ENCODE measurements at regions of chr2 and their contacts with region 1.

Region 1: GRCh38 chr2:37877457-37878315 is 47.4 kb upstream of the RMDN2 start:
- DNase-seq: peak in 1 of 5 donors; percentile 39
- ATAC-seq: peak; percentile 43 to 64 (median 46)
- H3K4me3 ChIP-seq: peak overlapping the region in 1 of 12 donors; percentile 12
- H3K27ac ChIP-seq: peak overlapping the region in 2 of 12 donors; percentile 5 to 8
- H3K4me1 ChIP-seq: peaks cover 0 to 47% (median 27%) of the 10 kb centered on the region in 12 donors
- H3K27me3 ChIP-seq: peaks cover 0 to 2% (median 0%) of the 10 kb centered on the region in 9 donors
- CTCF ChIP-seq: peak; percentile 61 to 87 (median 82)
- POLR2A ChIP-seq: no peak

Region 2: GRCh38 chr2:37156857-37157714 is 720.6 kb before region 1 on chr2 and contains the start of gene EIF2AK2:
- intact Hi-C with region 1: loop called in 1 of 10 experiments (anchors 10 kb)
- DNase-seq: peak; percentile 86 to 91 (median 88)
- ATAC-seq: peak; percentile 60 to 94 (median 90)
- H3K4me3 ChIP-seq: peak within 1 kb of the TSS; percentile 72 to 100 (median 89)
- H3K27ac ChIP-seq: peak within 1 kb of the TSS; percentile 75 to 96 (median 92)
- H3K4me1 ChIP-seq: peaks cover 0 to 25% (median 18%) of the 10 kb centered on the region in 12 donors
- H3K27me3 ChIP-seq: no peaks in the 10 kb centered on the region
- CTCF ChIP-seq: peak in 1 of 12 donors; percentile 11
- POLR2A ChIP-seq: no peak
- total RNA-seq, gene EIF2AK2: 12.5 to 38.2 (median 19.6) TPM

Region 3: GRCh38 chr2:37389989-37390765 is 487.5 kb before region 1 on chr2:
- intact Hi-C with region 1: loop called in 5 of 10 experiments (anchors 5 kb)
- DNase-seq: peak in 3 of 5 donors; percentile 30 to 34 (median 31)
- ATAC-seq: peak in 3 of 4 donors; percentile 67 to 93 (median 74)
- H3K4me3 ChIP-seq: no peak overlapping the region
- H3K27ac ChIP-seq: peak overlapping the region in 8 of 12 donors; percentile 26 to 87 (median 54)
- H3K4me1 ChIP-seq: peaks cover 0 to 46% (median 9%) of the 10 kb centered on the region in 12 donors
- H3K27me3 ChIP-seq: no peaks in the 10 kb centered on the region
- CTCF ChIP-seq: no peak
- POLR2A ChIP-seq: no peak

Region 4: DNA sequence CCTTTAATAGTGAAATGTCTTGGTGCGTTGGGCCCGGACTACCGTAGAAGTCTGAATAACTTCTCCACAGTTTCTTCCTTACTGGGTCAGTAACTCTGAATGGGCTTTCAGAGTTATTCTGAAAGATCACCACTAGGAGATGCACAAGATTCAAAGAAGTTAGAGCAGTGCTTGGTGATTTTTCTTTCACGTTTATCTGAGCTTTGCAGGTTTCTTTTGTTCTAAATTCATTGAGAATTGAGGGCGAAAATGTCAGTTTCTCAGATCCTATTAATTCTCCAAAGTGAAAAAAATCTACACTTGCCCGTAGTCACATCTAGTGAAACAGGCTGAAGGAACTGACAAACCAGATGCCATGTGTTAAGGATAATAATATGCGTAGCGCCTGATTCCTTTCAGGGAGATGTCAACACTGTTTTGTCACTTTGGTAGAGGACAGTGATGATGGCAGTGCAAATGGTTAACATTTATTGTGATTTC is 463.2 kb before region 1 on chr2:
- intact Hi-C with region 1: loop called (anchors 1 to 5 kb)
- DNase-seq: no peak
- ATAC-seq: peak; percentile 72 to 88 (median 79)
- H3K4me3 ChIP-seq: peak overlapping the region in 3 of 12 donors; percentile 2 to 25 (median 12)
- H3K27ac ChIP-seq: peak overlapping the region in 11 of 12 donors; percentile 5 to 66 (median 39)
- H3K4me1 ChIP-seq: peaks cover 0 to 21% (median 9%) of the 10 kb centered on the region in 12 donors
- H3K27me3 ChIP-seq: no peaks in the 10 kb centered on the region
- CTCF ChIP-seq: peak; percentile 64 to 93 (median 86)
- POLR2A ChIP-seq: no peak

Region 5: DNA sequence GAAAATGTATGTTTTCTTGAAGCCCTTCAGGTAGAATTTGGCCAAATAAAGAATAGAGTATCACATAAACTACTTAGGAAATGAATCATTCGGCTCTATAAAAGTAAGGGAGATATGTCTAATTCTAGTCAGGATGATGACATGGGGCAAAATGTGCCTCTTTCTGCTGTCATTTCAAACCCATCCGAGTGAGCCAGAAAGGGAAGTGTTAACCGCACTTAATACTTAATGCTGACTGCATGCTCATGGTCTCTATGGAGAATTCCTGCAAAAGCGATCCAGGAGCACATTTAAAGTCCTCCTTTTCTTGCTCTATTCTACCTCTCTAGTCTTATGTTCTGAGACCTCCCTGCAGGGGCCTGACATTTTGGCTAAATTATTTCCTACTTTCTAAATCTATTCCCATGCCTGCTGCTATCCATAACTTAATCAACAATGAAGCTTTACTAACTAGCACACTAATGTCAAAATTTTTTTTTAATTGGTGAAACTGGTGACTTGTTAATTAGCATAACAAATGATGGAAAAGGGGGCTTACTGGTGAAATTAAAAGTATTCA is 333.6 kb before region 1 on chr2:
- intact Hi-C with region 1: loop called in 2 of 10 experiments (anchors 5 to 10 kb)
- DNase-seq: no peak
- ATAC-seq: no peak
- H3K4me3 ChIP-seq: no peak overlapping the region
- H3K27ac ChIP-seq: no peak overlapping the region
- H3K4me1 ChIP-seq: peaks cover 0 to 6% (median 0%) of the 10 kb centered on the region in 12 donors
- H3K27me3 ChIP-seq: no peaks in the 10 kb centered on the region
- CTCF ChIP-seq: no peak
- POLR2A ChIP-seq: no peak

Region 6: DNA sequence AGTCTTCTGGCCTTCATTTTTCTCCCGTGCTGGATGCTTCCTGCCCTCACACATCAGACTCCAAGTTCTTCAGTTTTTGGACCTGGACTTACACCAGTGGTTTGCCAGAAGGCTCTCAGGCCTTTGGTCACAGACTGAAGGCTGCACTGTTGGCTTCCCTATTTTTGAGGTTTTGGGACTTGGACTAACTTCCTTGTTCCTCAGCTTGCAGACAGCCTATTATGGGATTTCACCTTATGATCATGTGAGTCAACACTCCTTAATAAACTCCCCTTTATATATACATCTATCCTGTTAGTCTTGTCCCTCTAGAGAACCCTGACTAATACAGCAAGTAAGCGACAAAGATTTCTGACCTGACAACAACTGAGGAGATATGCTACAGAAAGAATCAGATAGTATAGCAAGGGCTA is 213.4 kb before region 1 on chr2:
- intact Hi-C with region 1: loop called in 5 of 10 experiments (anchors 5 to 10 kb)
- DNase-seq: no peak
- ATAC-seq: no peak
- H3K4me3 ChIP-seq: no peak overlapping the region
- H3K27ac ChIP-seq: peak overlapping the region in 8 of 12 donors; percentile 8 to 100 (median 82)
- H3K4me1 ChIP-seq: peaks cover 15 to 100% (median 69%) of the 10 kb centered on the region in 12 donors
- H3K27me3 ChIP-seq: no peaks in the 10 kb centered on the region
- CTCF ChIP-seq: no peak
- POLR2A ChIP-seq: no peak

Region 7: GRCh38 chr2:37832590-37833197 is 45.0 kb before region 1 on chr2:
- intact Hi-C with region 1: loop called (anchors 1 to 10 kb)
- DNase-seq: peak; percentile 82 to 91 (median 88)
- ATAC-seq: peak; percentile 62 to 87 (median 80)
- H3K4me3 ChIP-seq: no peak overlapping the region
- H3K27ac ChIP-seq: peak overlapping the region in 5 of 12 donors; percentile 32 to 86 (median 79)
- H3K4me1 ChIP-seq: peaks cover 0 to 45% (median 31%) of the 10 kb centered on the region in 12 donors
- H3K27me3 ChIP-seq: no peaks in the 10 kb centered on the region
- CTCF ChIP-seq: peak; percentile 60 to 84 (median 77)
- POLR2A ChIP-seq: no peak

Measured in heart left ventricle (tissue), 16 donors.